ENCODE measurements at regions of chr14 and their contacts with region 1.

Region 1: GRCh38 chr14:102774391-102775153 is 2.7 kb upstream of the TRAF3 start:
- DNase-seq: peak; percentile 49 to 60
- H3K4me3 ChIP-seq: no peak overlapping the region
- H3K27ac ChIP-seq: no peak overlapping the region
- H3K4me1 ChIP-seq: peaks cover 3 to 13% (median 10%) of the 10 kb centered on the region in 4 experiments
- H3K27me3 ChIP-seq: peaks cover 0 to 10% (median 8%) of the 10 kb centered on the region in 4 experiments; a peak in 5 of 7 replicates
- CTCF ChIP-seq: peak; percentile 71 to 83 (median 73)
- EP300 ChIP-seq: no peak
- POLR2A ChIP-seq: no peak
- RAD21 ChIP-seq: peak; percentile 63 to 69

Region 2: GRCh38 chr14:102759456-102760187 is 14.9 kb before region 1 on chr14:
- CTCF ChIA-PET with region 1: interaction called, 31 read pairs
- POLR2A ChIA-PET with region 1: interaction called, 3 read pairs
- DNase-seq: no peak
- H3K4me3 ChIP-seq: no peak overlapping the region
- H3K27ac ChIP-seq: no peak overlapping the region
- H3K4me1 ChIP-seq: peaks cover 4 to 19% (median 14%) of the 10 kb centered on the region in 4 experiments
- H3K27me3 ChIP-seq: no peaks in the 10 kb centered on the region; a peak in 1 of 7 replicates
- CTCF ChIP-seq: peak in 2 of 3 experiments; percentile 4 to 32; a peak in 2 of 4 replicates
- EP300 ChIP-seq: no peak
- POLR2A ChIP-seq: no peak
- RAD21 ChIP-seq: peak; percentile 31 to 51

Region 3: GRCh38 chr14:102785584-102785942 is 11.0 kb after region 1 on chr14:
- CTCF ChIA-PET with region 1: interaction called, 27 read pairs
- POLR2A ChIA-PET with region 1: interaction called, 3 read pairs
- DNase-seq: no peak
- H3K4me3 ChIP-seq: no peak overlapping the region
- H3K27ac ChIP-seq: no peak overlapping the region
- H3K4me1 ChIP-seq: 0 out of 7 replicates have a peak, but pooled peaks cover 0 to 3% (median 0%) of the 10 kb centered on the region in 4 experiments
- H3K27me3 ChIP-seq: no peaks in the 10 kb centered on the region
- CTCF ChIP-seq: peak; percentile 29 to 50 (median 36)
- EP300 ChIP-seq: no peak
- POLR2A ChIP-seq: no peak
- RAD21 ChIP-seq: peak; percentile 65 to 72

Region 4: GRCh38 chr14:102885737-102886447 is 111.3 kb after region 1 on chr14:
- CTCF ChIA-PET with region 1: no interaction called
- POLR2A ChIA-PET with region 1: no interaction called
- DNase-seq: no peak
- H3K4me3 ChIP-seq: no peak overlapping the region
- H3K27ac ChIP-seq: no peak overlapping the region; the same call in 1 of the 2 replicates
- H3K4me1 ChIP-seq: 0 out of 7 replicates have a peak, but pooled peaks cover 0 to under 1% (median 0%) of the 10 kb centered on the region in 4 experiments
- H3K27me3 ChIP-seq: no peaks in the 10 kb centered on the region
- CTCF ChIP-seq: no peak
- EP300 ChIP-seq: no peak
- POLR2A ChIP-seq: no peak
- RAD21 ChIP-seq: no peak

Region 5: GRCh38 chr14:102922490-102923200 is 148.1 kb after region 1 on chr14 and contains the start of gene AMN:
- CTCF ChIA-PET with region 1: interaction called, 12 read pairs
- POLR2A ChIA-PET with region 1: interaction called, 3 read pairs
- DNase-seq: peak in 1 of 2 experiments; percentile 72
- H3K4me3 ChIP-seq: peak within 1 kb of the TSS; percentile 22 to 56 (median 34); a peak in 7 of 8 replicates
- H3K27ac ChIP-seq: no peak within 1 kb of the TSS
- H3K4me1 ChIP-seq: peaks cover 5 to 22% (median 12%) of the 10 kb centered on the region in 4 experiments
- H3K27me3 ChIP-seq: peaks cover 23 to 59% (median 48%) of the 10 kb centered on the region in 4 experiments; a peak in 6 of 7 replicates
- CTCF ChIP-seq: no peak
- EP300 ChIP-seq: no peak
- POLR2A ChIP-seq: no peak
- RAD21 ChIP-seq: no peak
- total RNA-seq, gene AMN: 0.99 and 1.5 TPM in 2 replicates

Region 6: DNA sequence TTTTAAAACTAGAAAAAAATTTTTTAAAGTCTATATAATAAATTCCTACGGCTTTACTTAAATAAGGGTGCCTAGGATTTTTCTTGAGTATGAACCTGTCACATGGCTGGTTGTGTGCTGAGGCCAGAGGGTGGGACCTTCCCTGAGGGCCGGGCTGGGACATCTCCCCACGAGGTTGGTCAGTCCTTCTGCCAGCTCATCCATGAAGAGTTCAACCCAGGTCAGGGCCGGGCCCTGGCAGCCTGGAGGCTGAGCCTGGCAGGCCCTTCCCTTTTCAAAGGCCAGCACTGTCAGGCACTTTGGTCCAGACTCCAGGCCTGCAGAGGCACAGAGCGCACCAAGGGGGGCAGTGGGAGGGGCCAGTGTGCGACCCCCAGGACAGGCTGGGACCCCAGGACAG is 380.4 kb after region 1 on chr14:
- CTCF ChIA-PET with region 1: no interaction called
- POLR2A ChIA-PET with region 1: no interaction called
- DNase-seq: no peak
- H3K4me3 ChIP-seq: no peak overlapping the region
- H3K27ac ChIP-seq: no peak overlapping the region
- H3K4me1 ChIP-seq: peaks cover 0 to 5% (median 4%) of the 10 kb centered on the region in 4 experiments; a peak in 3 of 7 replicates
- H3K27me3 ChIP-seq: no peaks in the 10 kb centered on the region
- CTCF ChIP-seq: no peak
- EP300 ChIP-seq: no peak
- POLR2A ChIP-seq: no peak
- RAD21 ChIP-seq: no peak